Endothelial cell of umbilical vein (primary cell): ENCODE measurements at regions of chr2 and their contacts with region 1.

Region 1: GRCh38 chr2:229800997-229801754 is 86.8 kb upstream of the DNER start:
- DNase-seq: peak; percentile 79
- H3K4me3 ChIP-seq: no peak overlapping the region
- H3K27ac ChIP-seq: no peak overlapping the region
- H3K4me1 ChIP-seq: no peaks in the 10 kb centered on the region
- H3K27me3 ChIP-seq: no peaks in the 10 kb centered on the region
- CTCF ChIP-seq: peak; percentile 64 to 69
- POLR2A ChIP-seq: no peak

Region 2: GRCh38 chr2:228312172-228312571 is 1489.0 kb before region 1 on chr2:
- CTCF ChIA-PET with region 1: no interaction called
- POLR2A ChIA-PET with region 1: no interaction called
- dilution Hi-C with region 1: no loop called
- intact Hi-C with region 1: no loop called
- DNase-seq: no peak
- H3K4me3 ChIP-seq: no peak overlapping the region
- H3K27ac ChIP-seq: no peak overlapping the region
- H3K4me1 ChIP-seq: no peaks in the 10 kb centered on the region
- H3K27me3 ChIP-seq: no peaks in the 10 kb centered on the region
- CTCF ChIP-seq: no peak
- POLR2A ChIP-seq: no peak

Region 3: GRCh38 chr2:229686122-229686919 is 114.9 kb before region 1 on chr2:
- CTCF ChIA-PET with region 1: no interaction called
- POLR2A ChIA-PET with region 1: no interaction called
- dilution Hi-C with region 1: no loop called
- intact Hi-C with region 1: no loop called
- DNase-seq: no peak
- H3K4me3 ChIP-seq: no peak overlapping the region
- H3K27ac ChIP-seq: no peak overlapping the region
- H3K4me1 ChIP-seq: no peaks in the 10 kb centered on the region
- H3K27me3 ChIP-seq: no peaks in the 10 kb centered on the region
- CTCF ChIP-seq: no peak
- POLR2A ChIP-seq: no peak

Region 4: GRCh38 chr2:229701062-229701461 is 100.1 kb before region 1 on chr2:
- CTCF ChIA-PET with region 1: no interaction called
- POLR2A ChIA-PET with region 1: no interaction called
- dilution Hi-C with region 1: no loop called
- intact Hi-C with region 1: no loop called
- DNase-seq: no peak
- H3K4me3 ChIP-seq: no peak overlapping the region
- H3K27ac ChIP-seq: no peak overlapping the region
- H3K4me1 ChIP-seq: no peaks in the 10 kb centered on the region
- H3K27me3 ChIP-seq: no peaks in the 10 kb centered on the region
- CTCF ChIP-seq: no peak
- POLR2A ChIP-seq: no peak

Region 5: GRCh38 chr2:229780856-229781773 is 20.1 kb before region 1 on chr2:
- CTCF ChIA-PET with region 1: interaction called, 20 read pairs
- POLR2A ChIA-PET with region 1: no interaction called
- dilution Hi-C with region 1: no loop called
- intact Hi-C with region 1: no loop called
- DNase-seq: peak; percentile 76
- H3K4me3 ChIP-seq: no peak overlapping the region
- H3K27ac ChIP-seq: peak overlapping the region; percentile 31
- H3K4me1 ChIP-seq: peaks cover 13% of the 10 kb centered on the region
- H3K27me3 ChIP-seq: no peaks in the 10 kb centered on the region
- CTCF ChIP-seq: peak; percentile 74 to 75
- POLR2A ChIP-seq: no peak

Region 6: DNA sequence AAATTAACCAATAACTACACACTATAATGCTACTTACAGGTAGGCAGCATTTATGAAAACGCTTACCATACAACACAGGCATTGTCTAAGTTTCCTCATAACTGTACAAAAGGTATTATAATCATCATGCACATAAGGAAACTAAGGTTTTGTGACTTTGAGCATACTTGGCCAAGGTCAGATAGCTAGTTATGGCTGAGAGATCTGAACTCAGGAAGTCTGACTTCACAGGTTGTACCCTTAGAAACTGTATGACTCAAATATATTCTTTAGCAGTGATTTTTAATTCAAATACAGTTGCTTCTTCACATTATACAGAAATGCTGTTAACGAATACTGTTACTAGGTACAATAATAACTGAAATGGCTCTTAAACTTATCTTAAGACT is 31.3 kb after region 1 on chr2:
- CTCF ChIA-PET with region 1: interaction called, 26 read pairs
- POLR2A ChIA-PET with region 1: no interaction called
- dilution Hi-C with region 1: no loop called
- intact Hi-C with region 1: no loop called
- DNase-seq: peak; percentile 70
- H3K4me3 ChIP-seq: no peak overlapping the region
- H3K27ac ChIP-seq: peak overlapping the region; percentile 18
- H3K4me1 ChIP-seq: peaks cover 13% of the 10 kb centered on the region
- H3K27me3 ChIP-seq: no peaks in the 10 kb centered on the region
- CTCF ChIP-seq: no peak
- POLR2A ChIP-seq: no peak

Region 7: GRCh38 chr2:229901819-229902218 is 100.6 kb after region 1 on chr2:
- CTCF ChIA-PET with region 1: interaction called, 13 read pairs
- POLR2A ChIA-PET with region 1: no interaction called
- dilution Hi-C with region 1: no loop called
- intact Hi-C with region 1: no loop called
- DNase-seq: peak; percentile 43
- H3K4me3 ChIP-seq: no peak overlapping the region
- H3K27ac ChIP-seq: no peak overlapping the region
- H3K4me1 ChIP-seq: peaks cover 9% of the 10 kb centered on the region
- H3K27me3 ChIP-seq: no peaks in the 10 kb centered on the region
- CTCF ChIP-seq: no peak
- POLR2A ChIP-seq: no peak

Region 8: DNA sequence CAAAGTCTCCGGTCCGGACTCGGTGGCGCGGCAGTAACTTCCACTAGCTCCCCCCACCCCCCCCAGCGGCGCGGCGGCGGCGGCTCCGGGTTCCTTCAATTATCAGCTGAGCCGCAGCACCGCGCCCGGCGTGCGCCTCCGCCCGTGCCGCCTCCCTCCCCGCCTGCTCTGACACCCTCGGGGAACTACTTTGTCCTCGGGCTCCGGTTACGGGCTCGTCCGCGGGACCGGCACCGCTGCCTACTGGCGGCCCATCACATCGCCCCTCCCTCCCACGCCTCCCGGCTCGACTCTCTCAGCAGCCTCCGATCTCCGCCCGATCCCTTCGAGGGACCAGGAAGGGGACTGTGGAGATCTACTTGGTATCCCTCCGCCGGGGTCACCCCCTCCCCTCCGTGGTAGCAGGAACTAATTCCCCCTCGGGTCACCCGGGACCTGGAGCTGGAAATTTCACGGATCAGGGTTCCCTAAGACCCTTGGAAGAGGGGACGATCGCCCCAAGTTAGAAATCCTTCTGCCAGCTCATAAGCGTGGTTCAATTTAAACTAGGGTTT is 120.8 kb after region 1 on chr2 and contains the start of gene TRIP12:
- CTCF ChIA-PET with region 1: interaction called, 30 read pairs
- POLR2A ChIA-PET with region 1: interaction called, 3 read pairs
- dilution Hi-C with region 1: no loop called
- intact Hi-C with region 1: loop called (anchors 1 kb)
- DNase-seq: peak; percentile 97
- H3K4me3 ChIP-seq: peak within 1 kb of the TSS; percentile 62 to 98 (median 90)
- H3K27ac ChIP-seq: peak within 1 kb of the TSS; percentile 91
- H3K4me1 ChIP-seq: peaks cover 12% of the 10 kb centered on the region
- H3K27me3 ChIP-seq: no peaks in the 10 kb centered on the region
- CTCF ChIP-seq: no peak
- POLR2A ChIP-seq: peak; percentile 62
- total RNA-seq, gene TRIP12: 256 and 278 TPM in 2 replicates

Region 9: GRCh38 chr2:230007931-230008707 is 206.9 kb after region 1 on chr2:
- CTCF ChIA-PET with region 1: interaction called, 13 read pairs
- POLR2A ChIA-PET with region 1: no interaction called
- dilution Hi-C with region 1: no loop called
- intact Hi-C with region 1: loop called (anchors 1 kb)
- DNase-seq: peak; percentile 78
- H3K4me3 ChIP-seq: peak overlapping the region in 1 of 3 experiments; percentile 20
- H3K27ac ChIP-seq: no peak overlapping the region
- H3K4me1 ChIP-seq: peaks cover 7% of the 10 kb centered on the region
- H3K27me3 ChIP-seq: no peaks in the 10 kb centered on the region
- CTCF ChIP-seq: peak; percentile 67 to 78
- POLR2A ChIP-seq: no peak

Region 10: GRCh38 chr2:230160112-230160660 is 359.0 kb after region 1 on chr2:
- CTCF ChIA-PET with region 1: interaction called, 20 read pairs
- POLR2A ChIA-PET with region 1: no interaction called
- dilution Hi-C with region 1: no loop called
- intact Hi-C with region 1: loop called (anchors 1 kb)
- DNase-seq: peak; percentile 71
- H3K4me3 ChIP-seq: no peak overlapping the region
- H3K27ac ChIP-seq: no peak overlapping the region
- H3K4me1 ChIP-seq: no peaks in the 10 kb centered on the region
- H3K27me3 ChIP-seq: peaks cover 0 to 7% of the 10 kb centered on the region in 2 experiments
- CTCF ChIP-seq: peak; percentile 65 to 76
- POLR2A ChIP-seq: no peak

Region 11: GRCh38 chr2:230643576-230644291 is 842.6 kb after region 1 on chr2:
- CTCF ChIA-PET with region 1: no interaction called
- POLR2A ChIA-PET with region 1: no interaction called
- dilution Hi-C with region 1: no loop called
- intact Hi-C with region 1: no loop called
- DNase-seq: no peak
- H3K4me3 ChIP-seq: no peak overlapping the region
- H3K27ac ChIP-seq: no peak overlapping the region
- H3K4me1 ChIP-seq: peaks cover 3% of the 10 kb centered on the region
- H3K27me3 ChIP-seq: no peaks in the 10 kb centered on the region
- CTCF ChIP-seq: no peak
- POLR2A ChIP-seq: no peak